GM10248 (cell line): ENCODE measurements at regions of chr4 and their contacts with region 1.

Region 1: DNA sequence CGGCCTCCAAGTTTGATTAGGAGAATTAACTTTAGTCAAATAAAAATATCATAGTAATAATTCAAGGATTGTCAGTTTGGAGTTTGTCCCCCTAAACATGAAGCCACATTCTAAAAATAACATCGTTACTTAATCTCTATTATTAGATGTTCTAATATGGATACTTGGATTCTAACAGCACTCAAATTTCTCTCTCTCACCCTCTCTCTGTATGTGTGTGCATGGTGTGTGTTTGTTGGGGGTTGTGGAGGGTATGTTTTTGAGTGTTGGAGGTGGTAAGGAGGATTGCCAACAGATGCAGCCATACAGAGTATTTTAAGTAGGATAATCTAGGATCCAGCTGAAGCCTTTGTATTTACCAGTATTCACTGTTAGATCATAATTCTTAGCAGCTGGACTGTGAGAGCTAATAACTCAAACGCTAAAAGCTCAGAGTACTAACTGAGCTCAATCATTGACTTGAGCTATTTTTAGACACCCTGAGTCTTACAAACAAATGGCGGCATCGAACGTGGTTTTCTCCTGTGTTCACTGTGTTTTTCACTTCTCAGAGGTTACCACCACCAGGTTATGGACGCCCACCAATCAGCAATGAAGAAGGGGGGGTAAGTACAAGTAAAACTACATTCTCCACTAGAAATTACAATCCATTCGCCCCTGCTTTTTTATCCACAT is 8.8 kb downstream of the ENAM start:
- DNase-seq: peak; percentile 13
- CTCF ChIP-seq: no peak

Region 2: GRCh38 chr4:69999420-69999819 is 638.0 kb before region 1 on chr4:
- CTCF ChIA-PET with region 1: no interaction called
- POLR2A ChIA-PET with region 1: no interaction called
- DNase-seq: no peak
- CTCF ChIP-seq: no peak

Region 3: DNA sequence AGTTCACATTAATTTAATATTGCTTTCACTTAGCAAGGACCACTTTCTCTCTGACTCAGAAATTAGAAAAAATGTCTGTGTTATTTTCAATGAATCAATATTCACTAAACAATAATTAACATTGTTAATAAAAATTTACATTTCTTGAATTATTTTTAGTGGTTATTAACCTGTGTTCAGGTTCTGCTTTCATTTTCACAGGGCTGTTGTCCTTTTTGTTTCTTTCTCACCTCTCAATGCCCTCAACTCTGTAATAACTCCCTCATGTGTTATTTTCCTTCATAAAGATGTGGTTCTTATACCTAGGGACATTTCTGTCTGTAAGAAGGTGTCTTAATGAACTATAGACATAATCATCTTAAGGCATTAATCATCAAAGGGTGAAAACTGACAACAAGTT is 526.5 kb before region 1 on chr4:
- CTCF ChIA-PET with region 1: no interaction called
- POLR2A ChIA-PET with region 1: no interaction called
- DNase-seq: no peak
- CTCF ChIP-seq: no peak

Region 4: GRCh38 chr4:70651864-70652506 is 14.6 kb after region 1 on chr4:
- CTCF ChIA-PET with region 1: interaction called, 17 read pairs
- POLR2A ChIA-PET with region 1: no interaction called
- DNase-seq: peak; percentile 36
- CTCF ChIP-seq: peak; percentile 39

Region 5: DNA sequence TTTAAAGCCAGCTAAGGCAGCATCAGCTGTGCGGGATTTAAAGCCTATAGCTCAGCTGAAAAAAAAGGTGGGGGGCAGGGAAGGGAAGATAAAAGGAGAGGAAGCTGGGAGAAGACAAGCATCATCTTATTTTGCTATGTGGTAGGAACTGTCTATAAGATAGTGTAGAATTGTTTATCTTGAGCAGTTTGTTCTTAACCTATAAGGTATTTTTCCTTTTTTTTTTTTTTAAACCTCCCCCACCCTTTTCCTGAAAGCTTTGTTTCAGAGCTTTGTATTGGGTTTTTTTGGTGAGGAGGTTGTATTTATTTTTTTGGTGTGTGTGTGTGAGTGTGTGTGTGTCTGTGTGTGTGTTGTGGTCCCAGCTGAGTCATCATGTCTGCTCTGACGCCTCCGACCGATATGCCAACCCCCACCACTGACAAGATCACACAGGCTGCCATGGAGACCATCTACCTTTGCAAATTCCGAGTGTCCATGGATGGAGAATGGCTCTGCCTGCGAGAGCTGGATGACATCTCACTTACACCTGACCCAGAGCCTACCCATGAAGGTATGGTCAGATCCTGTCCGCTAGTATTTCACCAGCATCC is 84.9 kb after region 1 on chr4:
- CTCF ChIA-PET with region 1: no interaction called
- POLR2A ChIA-PET with region 1: no interaction called
- DNase-seq: no peak
- CTCF ChIP-seq: no peak

Region 6: GRCh38 chr4:70839589-70840093 is 202.3 kb after region 1 on chr4 and contains the start of gene GRSF1:
- CTCF ChIA-PET with region 1: no interaction called
- POLR2A ChIA-PET with region 1: no interaction called
- DNase-seq: peak; percentile 93
- CTCF ChIP-seq: peak; percentile 15